WTC11 (cell line): ENCODE measurements at regions of chr1 and their contacts with region 1.

Region 1: DNA sequence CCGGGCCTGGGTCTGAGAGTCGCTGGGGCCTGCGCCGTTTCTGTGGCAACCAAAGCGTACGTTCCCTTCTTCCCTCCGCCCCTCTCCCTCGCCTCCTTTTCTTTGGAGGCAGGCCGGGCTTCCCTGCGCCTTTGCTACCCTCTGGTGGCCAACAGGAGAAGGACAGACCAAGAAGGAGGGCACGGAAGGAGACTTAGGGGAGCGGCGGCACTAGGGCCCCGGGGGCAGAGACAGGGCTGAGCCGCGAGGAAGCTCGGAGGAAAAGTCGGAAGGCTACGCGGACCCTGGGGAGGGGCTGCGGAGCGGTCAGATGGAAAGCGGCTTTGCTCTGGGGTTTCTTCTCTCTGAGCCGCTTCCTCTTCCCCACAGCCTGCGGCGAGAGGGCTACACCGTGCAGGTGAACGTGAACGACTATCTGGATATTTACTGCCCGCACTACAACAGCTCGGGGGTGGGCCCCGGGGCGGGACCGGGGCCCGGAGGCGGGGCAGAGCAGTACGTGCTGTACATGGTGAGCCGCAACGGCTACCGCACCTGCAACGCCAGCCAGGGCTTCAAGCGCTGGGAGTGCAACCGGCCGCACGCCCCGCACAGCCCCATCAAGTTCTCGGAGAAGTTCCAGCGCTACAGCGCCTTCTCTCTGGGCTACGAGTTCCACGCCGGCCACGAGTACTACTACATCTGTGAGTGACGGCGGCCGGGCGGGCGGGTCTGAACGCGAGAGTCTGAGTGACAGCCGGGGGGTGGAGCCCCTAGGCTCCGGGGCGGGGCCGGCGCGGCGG is 6.3 kb downstream of the EFNA3 start:
- DNase-seq: peak; percentile 97
- ATAC-seq: peak; percentile 67
- H3K4me3 Mint-ChIP-seq: peak overlapping the region; percentile 95
- H3K27ac Mint-ChIP-seq: peak overlapping the region; percentile 74
- H3K4me1 Mint-ChIP-seq: peaks cover 35% of the 10 kb centered on the region
- H3K27me3 Mint-ChIP-seq: peaks cover 45% of the 10 kb centered on the region
- CTCF ChIP-seq: peak; percentile 90

Region 2: DNA sequence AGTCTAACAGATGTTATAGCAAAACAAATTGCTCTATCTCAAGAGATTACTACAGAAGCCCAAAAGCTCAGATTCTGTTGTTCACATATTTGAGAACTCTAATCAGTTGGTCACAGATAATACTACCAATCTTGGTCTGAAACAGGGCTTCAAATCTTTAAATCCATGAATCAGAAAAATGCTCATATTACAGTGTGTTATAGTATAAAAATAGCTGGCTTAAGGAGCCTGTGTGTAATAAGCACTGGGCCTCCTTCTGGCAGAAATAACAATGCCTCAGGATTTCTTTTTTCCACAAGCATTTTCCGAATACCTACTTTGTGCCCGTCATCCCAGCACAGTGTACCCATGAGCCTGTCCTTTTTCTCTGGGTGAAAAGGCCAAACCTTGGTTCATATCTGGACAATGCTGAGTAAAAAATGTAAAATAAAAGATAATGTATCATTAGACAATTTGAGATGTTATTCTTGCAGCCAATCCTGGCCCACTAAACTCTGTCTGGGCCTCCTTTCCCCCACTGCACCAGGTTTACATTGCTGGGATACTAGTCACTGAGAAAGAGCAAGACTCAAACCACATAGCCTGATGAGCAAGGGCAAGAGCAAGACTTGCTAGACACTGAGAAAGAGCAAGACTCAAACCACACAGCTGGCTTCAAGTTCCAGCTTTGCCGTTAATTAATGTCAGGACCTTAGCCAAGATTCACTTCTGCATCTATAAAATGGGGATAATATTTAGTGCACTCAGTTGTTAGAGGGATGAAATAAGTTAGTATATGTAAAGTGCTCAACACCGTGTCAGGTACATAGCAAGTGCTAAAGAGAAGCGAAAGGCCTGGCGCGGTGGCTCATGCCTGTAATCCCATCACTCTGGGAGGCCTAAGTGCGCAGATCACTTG is 459.9 kb before region 1 on chr1:
- CTCF ChIA-PET with region 1: no interaction called
- POLR2A ChIA-PET with region 1: no interaction called
- DNase-seq: no peak
- ATAC-seq: no peak
- H3K4me3 Mint-ChIP-seq: no peak overlapping the region
- H3K27ac Mint-ChIP-seq: peak overlapping the region; percentile 27; the same call in 1 of the 2 replicates
- H3K4me1 Mint-ChIP-seq: peaks cover 21% of the 10 kb centered on the region
- H3K27me3 Mint-ChIP-seq: no peaks in the 10 kb centered on the region
- CTCF ChIP-seq: no peak

Region 3: DNA sequence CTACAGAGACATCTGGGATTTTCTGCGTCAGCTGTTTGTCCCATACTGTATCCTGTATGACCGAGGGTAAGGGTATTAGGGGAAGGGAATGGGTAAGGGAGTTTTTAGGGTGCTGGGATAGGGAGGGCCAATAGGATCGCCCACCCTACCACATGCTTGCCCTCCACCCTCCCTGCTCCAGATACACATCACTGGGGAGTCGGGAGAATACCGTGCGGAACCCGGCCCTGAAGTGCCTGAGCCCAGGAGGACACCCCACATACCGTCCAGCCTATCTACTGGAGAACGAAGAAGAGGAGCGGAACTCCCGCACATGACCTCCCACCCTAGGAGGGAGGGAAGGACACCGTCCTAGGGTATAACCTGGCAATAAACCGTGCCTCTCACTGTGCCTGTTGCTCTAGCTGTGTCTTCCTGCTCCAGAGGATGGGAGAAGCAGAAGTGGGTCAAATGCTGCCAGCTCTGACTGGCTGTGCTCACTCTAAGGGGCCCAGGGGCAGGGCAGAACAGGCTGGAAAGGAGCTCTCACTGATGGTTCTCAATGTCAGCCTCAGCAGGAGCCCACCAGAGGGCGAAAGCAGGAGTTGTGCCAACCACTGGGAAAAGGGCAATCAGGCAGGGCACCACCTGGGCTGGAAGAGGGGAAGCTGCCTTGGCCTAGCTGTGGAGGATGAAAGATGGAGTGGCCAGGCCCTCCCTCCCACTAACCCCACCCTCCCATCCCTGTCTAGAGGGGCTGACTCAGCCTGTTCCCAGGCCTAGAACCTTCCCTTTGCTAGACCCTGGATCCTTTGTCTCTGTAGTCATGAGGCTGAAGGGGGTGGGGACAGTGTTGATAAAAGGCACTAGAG is 92.0 kb before region 1 on chr1:
- CTCF ChIA-PET with region 1: interaction called, 12 read pairs
- POLR2A ChIA-PET with region 1: interaction called, 6 read pairs
- DNase-seq: no peak
- ATAC-seq: peak; percentile 56
- H3K4me3 Mint-ChIP-seq: no peak overlapping the region
- H3K27ac Mint-ChIP-seq: peak overlapping the region; percentile 70
- H3K4me1 Mint-ChIP-seq: peaks cover 11% of the 10 kb centered on the region; the same call in 1 of the 2 replicates
- H3K27me3 Mint-ChIP-seq: no peaks in the 10 kb centered on the region; the same call in 1 of the 2 replicates
- CTCF ChIP-seq: no peak

Region 4: GRCh38 chr1:155017041-155017945 is 67.6 kb before region 1 on chr1:
- CTCF ChIA-PET with region 1: interaction called, 18 read pairs
- POLR2A ChIA-PET with region 1: no interaction called
- DNase-seq: peak; percentile 93
- ATAC-seq: peak; percentile 88
- H3K4me3 Mint-ChIP-seq: peak overlapping the region; percentile 62
- H3K27ac Mint-ChIP-seq: peak overlapping the region; percentile 70
- H3K4me1 Mint-ChIP-seq: peaks cover 46% of the 10 kb centered on the region
- H3K27me3 Mint-ChIP-seq: peaks cover 4% of the 10 kb centered on the region; the same call in 1 of the 2 replicates
- CTCF ChIP-seq: peak; percentile 84

Region 5: DNA sequence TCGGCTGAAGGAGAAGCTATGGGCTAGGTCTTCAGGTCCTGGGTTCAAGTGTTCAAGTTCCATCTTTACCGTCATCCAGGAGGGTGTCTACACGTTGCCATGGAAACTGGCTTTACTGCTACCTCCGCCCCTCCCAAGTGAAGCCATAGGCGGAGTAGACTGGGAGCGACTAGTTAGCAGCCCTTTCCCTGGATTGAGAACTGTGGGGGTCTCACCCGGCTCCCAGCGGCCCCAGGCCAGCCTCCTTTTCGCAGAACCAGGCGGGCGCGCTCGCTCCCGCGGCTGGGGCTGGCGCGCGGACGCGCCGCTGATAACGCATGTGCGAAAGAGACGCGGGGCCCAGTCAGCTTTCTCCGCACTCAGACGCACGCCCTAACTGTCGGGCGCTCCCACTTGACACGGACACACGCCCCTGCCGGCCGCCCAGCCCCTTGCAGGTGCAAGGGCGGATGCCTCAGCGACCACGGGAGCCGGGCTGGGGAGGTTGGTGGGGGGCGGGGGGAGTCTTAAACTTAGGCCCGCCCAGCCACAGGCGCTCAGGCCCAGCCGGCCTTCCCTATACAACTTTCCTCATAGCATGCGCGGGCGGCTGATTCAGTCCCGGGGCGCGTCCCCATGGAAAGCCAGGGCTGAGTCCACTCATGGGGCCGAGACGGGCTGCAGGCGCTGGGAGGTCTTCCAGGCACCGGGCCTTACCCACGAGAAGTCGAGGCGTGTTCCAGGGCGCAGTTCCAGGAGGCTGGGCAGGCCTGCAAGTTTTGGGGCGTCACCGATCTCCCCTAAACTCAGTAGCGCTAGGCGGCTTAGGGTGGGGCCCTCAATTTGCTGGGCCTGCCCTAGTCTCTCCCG is 14.0 kb before region 1 on chr1:
- CTCF ChIA-PET with region 1: interaction called, 62 read pairs
- POLR2A ChIA-PET with region 1: interaction called, 10 read pairs
- DNase-seq: peak; percentile 94
- ATAC-seq: peak; percentile 78
- H3K4me3 Mint-ChIP-seq: peak overlapping the region; percentile 75
- H3K27ac Mint-ChIP-seq: no peak overlapping the region
- H3K4me1 Mint-ChIP-seq: peaks cover 41% of the 10 kb centered on the region
- H3K27me3 Mint-ChIP-seq: peaks cover 33% of the 10 kb centered on the region
- CTCF ChIP-seq: peak; percentile 52; the same call in 1 of the 2 replicates

Region 6: DNA sequence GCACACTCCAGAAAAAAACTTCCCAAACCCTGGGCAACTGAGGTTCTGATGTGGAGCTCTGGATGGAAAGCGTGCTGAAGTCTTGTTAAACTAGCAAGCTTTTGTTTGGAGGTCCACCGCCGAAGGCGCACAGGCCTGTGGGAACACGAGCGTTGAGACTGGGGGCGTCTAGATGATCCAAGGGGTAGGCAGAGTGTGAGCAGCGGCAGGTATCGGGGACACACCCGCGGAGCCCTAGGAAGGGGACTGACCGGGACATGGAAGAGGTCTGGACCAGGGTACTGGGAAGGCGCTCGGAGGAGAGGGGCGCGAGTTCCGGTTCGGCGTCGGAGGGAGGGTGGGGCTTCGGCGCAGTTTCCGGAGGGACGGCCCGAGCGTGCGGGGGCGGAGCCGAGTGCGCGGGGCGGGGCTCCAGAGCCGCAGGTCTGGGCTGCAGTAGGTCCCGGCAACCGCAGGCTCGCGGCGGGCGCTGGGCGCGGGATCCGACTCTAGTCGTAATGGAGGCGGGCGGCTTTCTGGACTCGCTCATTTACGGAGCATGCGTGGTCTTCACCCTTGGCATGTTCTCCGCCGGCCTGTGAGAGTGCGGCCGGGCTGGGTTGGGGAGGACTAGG is 50.6 kb after region 1 on chr1 and contains the start of gene SLC50A1:
- CTCF ChIA-PET with region 1: interaction called, 152 read pairs
- POLR2A ChIA-PET with region 1: interaction called, 4 read pairs
- DNase-seq: peak; percentile 97
- ATAC-seq: peak; percentile 87
- H3K4me3 Mint-ChIP-seq: peak within 1 kb of the TSS; percentile 96
- H3K27ac Mint-ChIP-seq: peak within 1 kb of the TSS; percentile 96
- H3K4me1 Mint-ChIP-seq: peaks cover 21% of the 10 kb centered on the region
- H3K27me3 Mint-ChIP-seq: peaks cover under 1% of the 10 kb centered on the region; the same call in 1 of the 2 replicates
- CTCF ChIP-seq: no peak
- total RNA-seq, gene SLC50A1: 39.0 to 47.8 TPM (median 46.0 TPM) in 3 replicates

Region 7: GRCh38 chr1:155193275-155193990 is 108.5 kb after region 1 on chr1:
- CTCF ChIA-PET with region 1: interaction called, 26 read pairs
- POLR2A ChIA-PET with region 1: interaction called, 5 read pairs
- DNase-seq: peak; percentile 97
- ATAC-seq: peak; percentile 67
- H3K4me3 Mint-ChIP-seq: peak overlapping the region; percentile 99
- H3K27ac Mint-ChIP-seq: peak overlapping the region; percentile 99
- H3K4me1 Mint-ChIP-seq: peaks cover 34% of the 10 kb centered on the region
- H3K27me3 Mint-ChIP-seq: peaks cover 4% of the 10 kb centered on the region; the same call in 1 of the 2 replicates
- CTCF ChIP-seq: peak; percentile 98